ENCODE measurements at regions of chr17 and their contacts with region 1.

Region 1: DNA sequence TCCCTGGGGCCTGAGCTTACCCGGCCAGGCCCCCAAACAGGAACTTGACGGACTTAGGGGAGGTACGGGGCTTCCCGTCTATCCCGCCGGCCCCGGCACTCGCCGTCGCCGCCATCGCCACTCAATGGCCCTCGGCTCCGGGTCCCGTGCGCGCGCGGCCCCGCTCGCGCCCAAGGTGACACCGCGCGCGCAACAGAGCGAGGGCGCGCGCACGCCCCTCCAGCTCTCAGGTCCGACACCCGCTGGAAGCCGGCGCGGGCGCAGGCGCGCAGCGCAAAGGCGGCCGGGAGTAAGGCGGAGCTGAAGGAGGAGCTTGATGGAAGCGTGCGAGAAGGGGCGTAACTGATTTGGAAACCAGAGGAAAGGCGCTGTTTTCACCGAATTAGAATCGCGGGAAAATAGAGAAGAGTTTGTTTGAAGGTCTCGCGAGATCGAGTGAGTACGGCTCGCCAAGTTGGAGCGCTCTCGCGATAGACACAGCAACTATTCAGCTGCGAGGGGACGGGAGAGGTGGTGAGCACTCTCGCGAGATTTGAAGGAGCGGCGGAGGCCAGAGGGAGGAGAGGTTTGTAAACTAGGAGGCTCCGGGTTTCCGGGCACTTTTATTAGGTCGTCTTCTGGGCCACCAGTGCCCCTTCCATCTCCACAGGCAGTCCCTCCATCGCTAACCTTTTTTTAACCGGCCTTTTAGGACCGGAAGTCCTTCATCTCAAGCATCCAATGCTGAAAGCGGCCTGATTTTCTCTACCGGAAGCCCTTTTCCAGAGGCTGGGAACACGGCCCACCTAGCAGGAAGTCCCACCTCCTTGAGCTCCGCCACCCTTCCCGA is at the starts of genes RNF167 and SLC25A11:
- DNase-seq: peak; percentile 100
- H3K4me3 ChIP-seq: peak within 1 kb of the TSS; percentile 68 to 92 (median 79)
- H3K27ac ChIP-seq: peak within 1 kb of the TSS; percentile 87
- H3K4me1 ChIP-seq: peaks cover 43% of the 10 kb centered on the region
- H3K27me3 ChIP-seq: no peaks in the 10 kb centered on the region
- CTCF ChIP-seq: no peak
- total RNA-seq, gene RNF167: 53.0 to 121 TPM
- total RNA-seq, gene SLC25A11: 35.5 to 46.7 TPM

Region 2: GRCh38 chr17:4997302-4998026 is 57.5 kb after region 1 on chr17 and contains the starts of genes INCA1 and KIF1C:
- CTCF ChIA-PET with region 1: no interaction called
- dilution Hi-C with region 1: loop called (anchors 5 kb)
- in situ Hi-C with region 1: no loop called
- intact Hi-C with region 1: loop called (anchors 2 kb)
- DNase-seq: peak; percentile 90
- H3K4me3 ChIP-seq: peak within 1 kb of the TSS; percentile 65 to 95 (median 82)
- H3K27ac ChIP-seq: peak within 1 kb of the TSS; percentile 43
- H3K4me1 ChIP-seq: peaks cover 12% of the 10 kb centered on the region
- H3K27me3 ChIP-seq: no peaks in the 10 kb centered on the region
- CTCF ChIP-seq: no peak
- total RNA-seq, gene INCA1: 0.33 to 0.42 TPM
- total RNA-seq, gene KIF1C: 105 to 198 TPM

Region 3: GRCh38 chr17:5838646-5839300 is 898.8 kb after region 1 on chr17:
- CTCF ChIA-PET with region 1: no interaction called
- dilution Hi-C with region 1: no loop called
- in situ Hi-C with region 1: no loop called
- intact Hi-C with region 1: no loop called
- DNase-seq: no peak
- H3K4me3 ChIP-seq: no peak overlapping the region
- H3K27ac ChIP-seq: no peak overlapping the region
- H3K4me1 ChIP-seq: peaks cover 32% of the 10 kb centered on the region
- H3K27me3 ChIP-seq: no peaks in the 10 kb centered on the region
- CTCF ChIP-seq: no peak

Measured in mammary epithelial cell (primary cell).